IMR-90 (cell line): ENCODE measurements at regions of chr6 and their contacts with region 1.

Region 1: GRCh38 chr6:83354747-83355146 is 76.1 kb downstream of the ME1 start:
- DNase-seq: peak; percentile 26
- ATAC-seq: no peak
- H3K4me3 ChIP-seq: no peak overlapping the region
- H3K27ac ChIP-seq: no peak overlapping the region
- H3K4me1 ChIP-seq: no peaks in the 10 kb centered on the region
- H3K27me3 ChIP-seq: no peaks in the 10 kb centered on the region
- CTCF ChIP-seq: no peak
- POLR2A ChIP-seq: no peak
- RAD21 ChIP-seq: no peak

Region 2: DNA sequence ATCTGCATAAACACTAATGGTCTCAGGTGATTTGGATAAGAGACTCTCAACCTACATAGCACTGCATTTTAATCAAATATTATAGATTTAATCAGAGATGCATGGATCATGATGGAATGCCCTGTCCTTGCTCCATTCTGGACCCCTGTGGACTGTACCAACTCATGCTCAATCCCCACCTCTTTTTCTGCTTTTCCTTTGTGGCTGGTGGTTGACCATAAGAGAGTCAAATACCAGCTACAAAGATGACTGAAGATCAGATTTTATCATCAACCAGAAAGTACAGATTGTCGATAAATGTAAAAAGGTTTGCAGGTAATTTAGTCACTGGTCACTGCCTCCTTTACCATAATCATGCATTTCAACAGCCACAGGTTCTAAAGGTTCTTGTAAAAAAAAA is 40.1 kb before region 1 on chr6:
- CTCF ChIA-PET with region 1: no interaction called
- POLR2A ChIA-PET with region 1: no interaction called
- dilution Hi-C with region 1: no loop called
- in situ Hi-C with region 1: no loop called
- intact Hi-C with region 1: loop called (anchors 5 kb)
- DNase-seq: no peak
- ATAC-seq: no peak
- H3K4me3 ChIP-seq: no peak overlapping the region
- H3K27ac ChIP-seq: no peak overlapping the region
- H3K4me1 ChIP-seq: peaks cover 3% of the 10 kb centered on the region; the same call in 1 of the 2 replicates
- H3K27me3 ChIP-seq: no peaks in the 10 kb centered on the region
- CTCF ChIP-seq: no peak
- POLR2A ChIP-seq: no peak
- RAD21 ChIP-seq: no peak

Region 3: DNA sequence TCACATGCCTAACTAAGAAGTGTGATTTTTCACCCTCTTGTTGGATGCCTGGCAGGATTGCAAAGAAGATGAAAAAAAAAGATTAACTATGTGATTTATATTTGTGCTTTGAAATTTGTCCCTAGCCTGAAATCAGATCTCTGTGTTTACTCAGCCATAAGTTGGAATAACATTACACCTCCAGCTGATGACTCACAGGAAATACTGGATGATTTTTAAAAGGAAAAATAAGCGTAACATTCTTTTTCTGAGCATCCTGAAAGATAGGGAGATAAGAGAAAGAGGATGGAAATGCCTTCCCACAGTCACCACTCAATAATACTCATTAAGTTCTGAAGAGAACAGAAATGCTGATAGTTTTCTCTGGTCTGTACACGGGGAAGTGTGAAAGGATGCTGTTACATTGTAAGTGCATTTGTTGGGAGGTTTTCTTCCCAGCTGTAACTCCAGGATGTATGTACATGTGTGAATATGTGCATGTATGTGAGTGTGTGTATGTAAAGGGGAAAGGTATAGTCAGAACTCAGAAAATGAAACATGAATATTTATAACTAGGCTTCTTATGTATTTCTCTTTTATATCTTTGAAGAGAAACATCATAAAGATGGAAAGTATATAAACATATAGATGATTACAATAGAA is 461.0 kb after region 1 on chr6:
- CTCF ChIA-PET with region 1: no interaction called
- POLR2A ChIA-PET with region 1: no interaction called
- dilution Hi-C with region 1: no loop called
- in situ Hi-C with region 1: no loop called
- intact Hi-C with region 1: no loop called
- DNase-seq: no peak
- ATAC-seq: peak; percentile 24; the same call in 1 of the 2 replicates
- H3K4me3 ChIP-seq: no peak overlapping the region
- H3K27ac ChIP-seq: no peak overlapping the region
- H3K4me1 ChIP-seq: no peaks in the 10 kb centered on the region
- H3K27me3 ChIP-seq: no peaks in the 10 kb centered on the region
- CTCF ChIP-seq: no peak
- POLR2A ChIP-seq: no peak
- RAD21 ChIP-seq: no peak